ENCODE measurements at regions of chr2 and their contacts with region 1.

Region 1: DNA sequence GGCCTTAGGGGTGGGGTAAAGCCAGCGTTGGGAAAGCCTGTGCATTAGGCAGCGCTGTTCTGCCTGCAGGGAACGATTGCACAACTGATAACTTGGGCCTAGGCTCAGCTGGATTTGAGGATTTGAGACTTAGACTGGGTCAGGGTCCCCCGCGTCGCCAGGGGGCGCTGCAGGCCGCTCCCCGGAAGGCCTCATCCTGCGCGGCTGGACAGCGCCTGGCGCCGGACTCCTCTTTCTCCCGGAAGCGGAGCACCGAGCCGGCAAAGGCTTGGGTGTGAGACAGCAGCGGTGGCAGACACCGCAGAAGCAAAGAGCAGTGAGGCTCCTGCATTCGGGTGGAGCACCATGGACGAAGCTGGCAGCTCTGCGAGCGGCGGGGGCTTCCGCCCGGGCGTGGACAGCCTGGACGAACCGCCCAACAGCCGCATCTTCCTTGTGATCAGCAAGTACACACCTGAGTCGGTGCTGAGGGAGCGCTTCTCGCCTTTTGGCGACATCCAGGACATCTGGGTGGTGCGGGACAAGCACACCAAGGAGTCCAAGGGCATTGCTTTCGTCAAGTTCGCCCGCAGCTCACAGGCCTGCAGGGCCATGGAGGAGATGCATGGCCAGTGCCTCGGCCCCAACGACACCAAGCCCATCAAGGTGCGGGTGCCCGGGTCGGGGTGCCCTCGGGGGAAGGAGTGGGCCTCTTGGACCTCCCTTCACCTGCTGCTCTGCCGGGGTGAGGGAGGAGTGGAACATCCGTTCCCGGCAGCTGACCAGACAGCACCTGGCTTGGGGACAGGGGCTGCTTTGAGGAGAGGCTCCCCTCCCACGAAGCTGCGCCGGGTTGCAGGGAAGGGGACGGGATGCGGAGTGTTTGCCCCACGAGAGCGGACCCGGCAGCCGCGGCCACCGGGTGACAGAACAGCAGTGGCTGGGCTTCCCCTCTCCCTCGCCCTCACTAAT is at the start of gene RBM45:
- DNase-seq: peak; percentile 89
- ATAC-seq: peak; percentile 98
- H3K4me3 ChIP-seq: peak within 1 kb of the TSS; percentile 81
- H3K27ac ChIP-seq: peak within 1 kb of the TSS; percentile 24
- H3K4me1 ChIP-seq: peaks cover 1% of the 10 kb centered on the region
- H3K27me3 ChIP-seq: no peaks in the 10 kb centered on the region
- CTCF ChIP-seq: peak; percentile 99
- POLR2A ChIP-seq: peak; percentile 65; the same call in 1 of the 2 replicates
- RAD21 ChIP-seq: peak; percentile 75
- total RNA-seq, gene RBM45: 17.9 and 18.1 TPM in 2 replicates

Region 2: DNA sequence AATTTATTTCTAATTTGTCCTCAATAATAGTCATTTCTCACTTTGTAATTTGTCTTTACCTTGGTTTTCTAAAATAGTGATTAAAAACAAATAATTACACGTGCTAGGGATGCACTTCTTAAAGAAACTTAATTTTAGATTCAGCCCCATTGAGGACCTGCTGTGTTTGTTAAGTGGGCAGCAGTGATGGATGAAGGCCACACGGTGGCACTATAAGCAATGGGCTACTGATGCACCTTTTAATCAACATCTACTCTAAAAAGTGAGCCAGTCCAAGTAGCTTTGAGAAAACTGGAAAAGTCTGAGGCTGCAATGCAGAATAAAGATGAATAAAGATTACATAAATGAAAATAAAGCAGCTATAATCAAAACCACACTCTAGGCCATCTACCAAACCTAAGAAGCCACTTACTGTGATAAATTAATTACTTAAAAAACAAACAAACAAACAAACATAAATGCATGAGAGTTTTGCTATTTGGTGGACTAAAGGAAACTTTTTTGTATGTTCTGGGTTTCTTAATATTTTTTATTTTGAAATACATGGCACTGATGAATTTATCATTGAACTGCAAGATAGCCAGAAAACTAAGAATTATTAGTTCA is 129.2 kb before region 1 on chr2:
- CTCF ChIA-PET with region 1: interaction called, 18 read pairs
- POLR2A ChIA-PET with region 1: no interaction called
- dilution Hi-C with region 1: no loop called
- in situ Hi-C with region 1: no loop called
- intact Hi-C with region 1: loop called (anchors 1 kb)
- DNase-seq: peak; percentile 71
- ATAC-seq: peak; percentile 96
- H3K4me3 ChIP-seq: no peak overlapping the region
- H3K27ac ChIP-seq: no peak overlapping the region
- H3K4me1 ChIP-seq: no peaks in the 10 kb centered on the region
- H3K27me3 ChIP-seq: no peaks in the 10 kb centered on the region; the same call in 1 of the 2 replicates
- CTCF ChIP-seq: peak; percentile 86
- POLR2A ChIP-seq: no peak
- RAD21 ChIP-seq: peak; percentile 84

Region 3: GRCh38 chr2:178128836-178129630 is 16.6 kb after region 1 on chr2:
- CTCF ChIA-PET with region 1: interaction called, 11 read pairs
- POLR2A ChIA-PET with region 1: no interaction called
- dilution Hi-C with region 1: no loop called
- in situ Hi-C with region 1: no loop called
- intact Hi-C with region 1: no loop called
- DNase-seq: peak; percentile 32
- ATAC-seq: no peak
- H3K4me3 ChIP-seq: no peak overlapping the region
- H3K27ac ChIP-seq: no peak overlapping the region
- H3K4me1 ChIP-seq: peaks cover 5% of the 10 kb centered on the region
- H3K27me3 ChIP-seq: no peaks in the 10 kb centered on the region
- CTCF ChIP-seq: no peak
- POLR2A ChIP-seq: no peak
- RAD21 ChIP-seq: no peak

Region 4: GRCh38 chr2:178280244-178280852 is 167.9 kb after region 1 on chr2:
- CTCF ChIA-PET with region 1: interaction called, 3 read pairs
- POLR2A ChIA-PET with region 1: no interaction called
- dilution Hi-C with region 1: no loop called
- in situ Hi-C with region 1: no loop called
- intact Hi-C with region 1: loop called (anchors 1 kb)
- DNase-seq: peak; percentile 59
- ATAC-seq: peak; percentile 72
- H3K4me3 ChIP-seq: no peak overlapping the region
- H3K27ac ChIP-seq: no peak overlapping the region
- H3K4me1 ChIP-seq: no peaks in the 10 kb centered on the region
- H3K27me3 ChIP-seq: no peaks in the 10 kb centered on the region
- CTCF ChIP-seq: peak; percentile 73
- POLR2A ChIP-seq: no peak
- RAD21 ChIP-seq: peak; percentile 54

Region 5: GRCh38 chr2:178522950-178523595 is 410.6 kb after region 1 on chr2:
- CTCF ChIA-PET with region 1: no interaction called
- POLR2A ChIA-PET with region 1: no interaction called
- dilution Hi-C with region 1: no loop called
- in situ Hi-C with region 1: no loop called
- intact Hi-C with region 1: loop called (anchors 5 kb)
- DNase-seq: peak; percentile 79
- ATAC-seq: peak; percentile 97
- H3K4me3 ChIP-seq: peak overlapping the region; percentile 96
- H3K27ac ChIP-seq: peak overlapping the region; percentile 85
- H3K4me1 ChIP-seq: no peaks in the 10 kb centered on the region
- H3K27me3 ChIP-seq: no peaks in the 10 kb centered on the region
- CTCF ChIP-seq: peak; percentile 89
- POLR2A ChIP-seq: peak; percentile 63; the same call in 1 of the 2 replicates
- RAD21 ChIP-seq: peak; percentile 45